ENCODE measurements at regions of chr16 and their contacts with region 1.

Region 1: GRCh38 chr16:10979717-10980601 is 35.6 kb downstream of the CLEC16A start:
- DNase-seq: peak in 1 of 5 donors; percentile 67
- H3K4me3 ChIP-seq: no peak overlapping the region
- H3K27ac ChIP-seq: no peak overlapping the region
- H3K4me1 ChIP-seq: peaks cover 0 to 6% (median 2%) of the 10 kb centered on the region in 3 donors
- H3K27me3 ChIP-seq: no peaks in the 10 kb centered on the region
- CTCF ChIP-seq: no peak

Region 2: DNA sequence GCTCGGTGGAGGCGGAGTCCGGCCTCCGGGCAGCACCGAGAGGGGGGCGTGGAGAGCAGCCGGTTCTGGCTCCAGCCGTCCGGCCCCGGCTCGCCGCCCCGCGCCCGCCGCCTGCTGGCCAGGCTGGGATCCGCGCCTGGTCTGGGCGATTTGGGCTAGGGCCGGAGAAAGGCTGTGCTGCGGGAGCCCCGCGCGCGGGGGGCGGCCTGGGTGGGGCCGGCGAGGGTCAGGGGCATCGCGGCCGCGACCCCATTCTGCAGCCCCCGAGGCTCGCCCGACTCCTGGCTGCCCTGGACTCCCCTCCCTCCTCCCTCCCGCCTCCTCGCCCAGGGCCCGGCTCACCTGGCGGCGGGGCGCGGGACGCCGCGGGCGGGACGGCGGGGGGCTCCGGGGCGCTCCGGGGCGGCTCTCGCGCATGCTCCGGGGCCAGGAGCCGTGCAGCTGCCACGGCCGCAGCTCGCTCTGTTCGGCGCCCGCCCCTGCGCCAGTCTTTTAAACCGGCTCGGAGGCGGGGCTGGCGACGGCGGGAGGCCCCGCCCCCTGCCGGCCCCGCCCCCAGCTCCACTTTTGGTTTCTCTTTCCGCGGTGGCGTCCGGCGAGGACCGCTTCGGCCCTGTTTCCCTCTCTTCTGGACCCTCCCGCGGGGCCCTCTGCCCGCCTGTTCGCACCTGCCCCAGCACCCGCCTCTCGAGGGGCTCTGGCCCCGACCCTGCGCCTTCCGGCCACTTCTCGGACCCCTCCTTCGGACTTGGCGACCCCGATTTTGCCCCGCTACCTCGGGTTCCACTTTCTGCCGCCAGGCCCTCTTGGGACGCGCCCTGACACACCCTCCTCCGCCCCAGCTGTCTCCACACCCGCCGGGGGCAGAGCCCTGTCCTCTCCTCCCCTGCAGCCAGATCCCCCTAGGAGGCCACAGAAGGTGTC is 276.0 kb after region 1 on chr16 and contains the start of gene SOCS1:
- intact Hi-C with region 1: loop called (anchors 5 kb)
- DNase-seq: peak; percentile 90 to 96 (median 94)
- H3K4me3 ChIP-seq: peak within 1 kb of the TSS; percentile 63 to 85 (median 64)
- H3K27ac ChIP-seq: peak within 1 kb of the TSS; percentile 98 to 99
- H3K4me1 ChIP-seq: peaks cover 0 to 30% (median 15%) of the 10 kb centered on the region in 3 donors
- H3K27me3 ChIP-seq: no peaks in the 10 kb centered on the region
- CTCF ChIP-seq: peak; percentile 87
- total RNA-seq, gene SOCS1: 21.8 TPM

Measured in kidney (tissue), 22 donors.